ENCODE measurements at regions of chr1 and their contacts with region 1.

Region 1: GRCh38 chr1:10430216-10431069 is at the start of gene CENPS:
- DNase-seq: peak; percentile 91 to 94
- H3K4me3 ChIP-seq: peak within 1 kb of the TSS; percentile 51 to 65
- H3K27ac ChIP-seq: peak within 1 kb of the TSS; percentile 61 to 78
- H3K4me1 ChIP-seq: no peaks in the 10 kb centered on the region
- H3K27me3 ChIP-seq: no peaks in the 10 kb centered on the region
- CTCF ChIP-seq: peak; percentile 85 to 99 (median 98)
- POLR2A ChIP-seq: peak in 1 of 2 donors; percentile 55
- total RNA-seq, gene CENPS: 2.6 to 15.4 (median 6.2) TPM

Region 2: DNA sequence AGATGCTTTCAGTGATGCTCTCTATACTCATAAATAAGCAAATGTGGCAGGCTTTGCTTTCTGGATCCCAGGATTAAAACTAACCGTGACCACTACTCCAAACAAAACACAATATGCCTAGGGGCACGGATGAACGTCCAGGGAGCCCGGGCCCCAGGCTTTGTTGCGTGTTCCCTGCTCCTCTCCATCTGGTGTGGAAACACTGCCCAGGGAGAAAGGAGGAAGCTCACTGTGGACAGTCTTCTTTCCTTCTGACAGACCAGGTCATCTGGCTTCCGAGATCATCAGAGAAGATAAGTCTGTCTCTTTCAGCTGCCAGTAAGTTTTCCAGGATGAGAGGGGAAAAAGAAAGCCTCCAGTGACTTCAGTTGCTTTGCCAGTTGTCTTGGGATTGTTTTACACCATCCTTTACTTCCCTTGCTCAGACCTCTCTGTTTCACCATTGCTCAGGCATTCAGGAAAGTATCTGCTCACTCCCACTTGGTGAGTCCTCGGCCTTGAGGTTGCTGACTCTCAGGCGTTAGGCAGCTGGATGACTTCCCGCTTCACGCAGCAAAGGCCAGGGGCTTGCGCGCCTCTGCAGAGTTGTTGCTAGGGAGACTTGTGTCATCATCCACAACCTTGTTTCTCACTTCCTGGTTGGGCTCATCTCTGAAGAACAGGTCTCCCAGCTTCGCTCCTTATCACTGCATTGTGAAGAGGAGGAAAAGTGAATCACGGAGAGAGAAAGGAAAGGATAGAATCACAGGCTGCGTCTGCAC is 52.2 kb before region 1 on chr1:
- intact Hi-C with region 1: loop called (anchors 5 kb)
- DNase-seq: peak in 1 of 2 donors; percentile 31
- H3K4me3 ChIP-seq: no peak overlapping the region
- H3K27ac ChIP-seq: peak overlapping the region; percentile 48 to 63
- H3K4me1 ChIP-seq: no peaks in the 10 kb centered on the region
- H3K27me3 ChIP-seq: no peaks in the 10 kb centered on the region
- CTCF ChIP-seq: no peak
- POLR2A ChIP-seq: no peak

Region 3: DNA sequence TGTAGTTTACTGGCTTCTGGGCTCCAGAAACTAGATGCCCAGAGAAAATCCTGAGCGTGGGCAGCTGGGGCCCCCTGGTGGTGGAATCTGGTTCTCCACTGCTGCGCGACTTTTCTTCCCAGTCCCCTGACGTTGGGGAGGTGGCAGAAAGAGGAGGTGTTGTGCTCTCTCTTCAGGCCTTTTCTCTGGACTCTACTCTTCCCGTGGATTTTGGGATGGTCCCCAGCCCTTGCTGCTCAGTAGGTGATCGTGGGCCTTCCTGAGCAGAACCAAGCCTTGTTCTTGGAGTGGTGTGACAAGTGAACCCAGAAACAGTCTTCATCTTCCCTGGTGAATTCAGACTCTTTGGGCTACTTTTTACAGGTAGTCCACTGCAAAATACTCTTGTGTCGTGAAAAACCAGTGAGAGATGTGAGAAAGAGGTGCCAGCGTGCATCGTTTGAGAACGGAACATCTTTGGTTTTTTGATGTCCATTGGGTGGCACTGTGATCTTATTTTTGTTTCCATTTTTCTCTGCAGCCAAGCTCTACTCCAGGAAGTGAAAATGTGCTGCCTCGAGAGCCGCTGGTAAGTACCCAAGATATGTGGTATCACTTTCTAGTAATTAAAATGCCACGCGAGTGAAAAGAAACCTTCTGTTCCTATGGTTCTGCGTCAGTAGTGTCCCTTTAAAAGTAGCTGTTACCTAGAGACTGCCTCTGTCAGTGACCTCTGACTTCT is 64.5 kb after region 1 on chr1:
- intact Hi-C with region 1: loop called (anchors 10 kb)
- DNase-seq: peak; percentile 64 to 73
- H3K4me3 ChIP-seq: peak overlapping the region in 1 of 2 donors; percentile 7
- H3K27ac ChIP-seq: peak overlapping the region in 1 of 2 donors; percentile 45
- H3K4me1 ChIP-seq: no peaks in the 10 kb centered on the region
- H3K27me3 ChIP-seq: no peaks in the 10 kb centered on the region
- CTCF ChIP-seq: peak; percentile 73 to 82 (median 80)
- POLR2A ChIP-seq: no peak

Measured in uterus (tissue), 4 donors.